ENCODE measurements at regions of chr6 and their contacts with region 1.

Region 1: DNA sequence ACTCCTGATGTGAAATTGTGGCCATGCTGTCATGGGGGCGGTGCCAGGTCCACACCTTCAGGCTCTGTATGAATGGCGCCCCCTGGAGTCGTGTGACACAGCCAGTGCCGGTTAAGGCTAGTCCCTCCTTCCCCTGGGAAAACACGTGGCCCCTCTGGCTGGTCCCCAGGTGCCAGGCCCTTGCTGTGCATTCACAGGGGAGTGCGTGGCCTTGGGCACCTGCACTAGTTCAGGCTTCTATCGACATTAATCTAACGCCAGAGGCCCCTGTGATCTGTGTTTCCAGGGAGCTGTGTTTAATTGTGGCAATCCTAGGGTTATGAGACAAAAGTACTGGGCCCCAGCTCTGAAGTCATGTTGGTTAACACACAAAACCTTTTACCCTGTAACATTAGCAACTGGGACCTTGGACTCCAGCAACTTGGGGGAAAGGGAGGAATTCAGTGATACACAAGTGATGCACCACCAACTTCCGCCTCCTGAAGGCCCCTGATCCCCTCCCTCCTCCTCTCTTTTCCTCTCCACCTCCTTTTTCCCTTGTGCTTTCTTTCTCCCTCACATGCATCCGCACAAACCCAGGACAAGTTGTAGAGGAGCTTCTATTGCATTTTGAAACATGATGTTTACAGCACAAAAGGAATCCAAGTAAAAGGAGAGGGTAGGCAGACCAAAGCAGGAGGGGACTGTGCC is 74.0 kb downstream of the SSR1 start:
- DNase-seq: peak; percentile 73 to 87 (median 83)
- H3K4me3 ChIP-seq: no peak overlapping the region
- H3K27ac ChIP-seq: no peak overlapping the region
- H3K4me1 ChIP-seq: no peaks in the 10 kb centered on the region
- H3K27me3 ChIP-seq: no peaks in the 10 kb centered on the region
- CTCF ChIP-seq: peak; percentile 26 to 53 (median 51)
- EP300 ChIP-seq: no peak
- POLR2A ChIP-seq: no peak

Region 2: DNA sequence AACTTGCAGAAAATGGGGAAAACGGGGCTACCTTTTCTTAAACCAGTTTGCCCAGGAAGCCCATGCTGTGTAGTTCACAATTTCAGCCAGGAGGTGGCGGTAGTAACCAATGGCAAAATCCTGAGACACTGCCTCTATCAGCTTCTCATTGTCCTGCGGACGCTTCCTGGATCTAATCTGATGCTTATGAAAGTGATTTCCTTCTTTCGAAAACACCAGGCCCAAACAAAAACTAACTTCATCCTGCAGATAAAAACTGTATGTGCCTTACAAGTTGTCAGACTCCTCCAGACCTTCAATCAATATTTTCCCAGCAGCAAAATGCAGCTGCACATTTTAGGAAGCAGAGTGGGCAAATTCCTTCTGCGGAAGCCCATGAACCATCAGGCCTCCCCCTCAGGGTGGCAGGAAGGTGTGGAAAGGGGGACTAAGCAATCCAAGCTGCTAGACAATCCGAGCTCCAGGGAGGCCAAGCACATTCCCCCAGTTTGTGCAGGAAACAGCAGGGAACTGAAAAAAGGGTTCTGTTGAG is 562.1 kb before region 1 on chr6:
- intact Hi-C with region 1: loop called in 2 of 4 experiments (anchors 1 to 5 kb)
- DNase-seq: peak; percentile 59 to 84 (median 82)
- H3K4me3 ChIP-seq: no peak overlapping the region
- H3K27ac ChIP-seq: no peak overlapping the region
- H3K4me1 ChIP-seq: no peaks in the 10 kb centered on the region
- H3K27me3 ChIP-seq: no peaks in the 10 kb centered on the region
- CTCF ChIP-seq: peak; percentile 81 to 95 (median 89)
- EP300 ChIP-seq: no peak
- POLR2A ChIP-seq: no peak

Region 3: DNA sequence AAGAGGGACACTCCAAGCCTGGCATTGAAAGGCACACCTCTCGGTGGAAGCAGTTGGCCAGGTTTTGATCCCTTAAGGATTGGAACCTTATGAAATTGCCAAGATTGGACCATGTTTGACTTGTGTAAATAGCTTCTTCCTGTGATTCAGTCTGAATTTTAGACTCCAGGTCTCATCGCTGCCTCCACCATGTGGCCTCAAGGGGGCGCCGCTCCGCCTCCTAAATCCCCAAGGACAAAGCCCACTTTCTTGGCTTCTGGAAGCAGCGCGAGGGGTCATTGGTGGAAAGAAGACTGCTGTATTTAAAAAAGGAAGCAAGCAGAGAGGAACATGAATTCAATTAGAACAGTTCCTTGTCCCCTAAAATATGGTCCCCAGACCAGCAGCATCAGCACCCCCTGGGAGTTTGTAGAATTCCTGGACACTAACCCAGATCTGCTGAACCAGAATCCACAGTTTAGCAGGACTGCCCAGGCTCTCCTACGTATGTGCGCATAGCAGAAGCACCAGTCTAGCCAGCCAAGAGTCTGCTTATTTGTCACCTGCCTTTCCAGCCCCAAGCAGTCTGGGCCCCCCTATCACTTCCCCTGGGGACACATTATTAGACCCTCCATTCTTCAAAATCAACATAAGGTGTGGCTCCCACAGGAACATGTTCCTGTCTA is 542.0 kb before region 1 on chr6:
- intact Hi-C with region 1: loop called in 1 of 4 experiments (anchors 10 kb)
- DNase-seq: peak; percentile 68 to 86 (median 72)
- H3K4me3 ChIP-seq: no peak overlapping the region
- H3K27ac ChIP-seq: no peak overlapping the region
- H3K4me1 ChIP-seq: peaks cover 34% of the 10 kb centered on the region
- H3K27me3 ChIP-seq: no peaks in the 10 kb centered on the region
- CTCF ChIP-seq: peak; percentile 24 to 53 (median 44)
- EP300 ChIP-seq: no peak
- POLR2A ChIP-seq: no peak

Region 4: DNA sequence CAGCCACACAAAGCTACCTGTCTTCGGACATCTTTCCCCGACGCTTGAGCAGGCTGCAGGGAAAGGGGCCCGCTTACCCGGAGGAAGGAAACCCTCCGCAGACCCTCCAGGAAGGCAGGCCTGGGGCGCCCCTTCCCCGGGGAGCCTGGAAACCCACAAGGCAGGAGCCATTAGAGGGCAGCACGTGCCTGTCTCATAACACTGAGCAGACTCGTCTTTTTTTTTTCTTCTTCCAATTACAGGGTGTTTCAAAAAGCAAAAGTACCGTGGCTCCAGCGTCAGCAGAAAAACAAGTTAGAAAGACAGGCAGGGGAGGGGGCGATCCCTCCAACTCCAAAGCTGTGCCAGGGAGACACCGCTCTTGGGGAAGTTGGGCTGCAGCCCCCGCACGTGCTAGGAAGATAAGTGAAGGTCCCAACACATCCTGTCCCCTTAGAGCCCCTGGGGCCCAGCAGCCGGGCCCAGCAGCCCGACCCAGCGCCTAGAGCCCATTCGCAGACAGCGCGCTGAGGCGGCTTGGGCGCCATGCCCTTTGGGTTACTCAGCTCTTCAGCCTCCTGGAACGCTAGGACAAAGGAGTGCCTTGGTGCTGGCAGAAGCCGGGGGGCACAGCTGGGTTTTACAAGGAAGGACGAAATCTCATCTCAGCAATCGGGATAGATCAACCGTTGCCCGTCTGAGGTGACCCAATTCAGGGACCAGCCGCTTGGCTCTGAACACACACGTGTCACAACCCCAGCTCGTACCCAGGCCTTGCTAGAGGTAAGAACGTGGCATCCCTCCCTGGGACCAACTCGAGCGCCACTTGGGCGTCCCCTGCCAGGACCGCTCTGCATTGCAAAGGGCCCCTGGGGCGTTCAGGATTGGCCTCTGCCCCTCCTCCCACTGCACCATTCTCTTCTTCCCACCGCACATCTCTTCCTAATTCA is 514.2 kb before region 1 on chr6:
- intact Hi-C with region 1: loop called (anchors 2 to 10 kb)
- DNase-seq: peak; percentile 82 to 86 (median 85)
- H3K4me3 ChIP-seq: peak overlapping the region; percentile 34
- H3K27ac ChIP-seq: peak overlapping the region; percentile 82 to 83
- H3K4me1 ChIP-seq: peaks cover 6% of the 10 kb centered on the region
- H3K27me3 ChIP-seq: no peaks in the 10 kb centered on the region
- CTCF ChIP-seq: peak; percentile 56 to 72 (median 59)
- EP300 ChIP-seq: no peak
- POLR2A ChIP-seq: no peak

Region 5: GRCh38 chr6:7129784-7130569 is 109.1 kb before region 1 on chr6:
- intact Hi-C with region 1: loop called in 1 of 4 experiments (anchors 10 kb)
- DNase-seq: no peak
- H3K4me3 ChIP-seq: no peak overlapping the region
- H3K27ac ChIP-seq: no peak overlapping the region
- H3K4me1 ChIP-seq: peaks cover 2% of the 10 kb centered on the region
- H3K27me3 ChIP-seq: no peaks in the 10 kb centered on the region
- CTCF ChIP-seq: no peak
- EP300 ChIP-seq: no peak
- POLR2A ChIP-seq: no peak

Region 6: GRCh38 chr6:7145885-7146828 is 92.9 kb before region 1 on chr6:
- intact Hi-C with region 1: no loop called
- DNase-seq: peak in 3 of 5 donors; percentile 43 to 51 (median 51)
- H3K4me3 ChIP-seq: no peak overlapping the region
- H3K27ac ChIP-seq: no peak overlapping the region
- H3K4me1 ChIP-seq: peaks cover 21% of the 10 kb centered on the region
- H3K27me3 ChIP-seq: no peaks in the 10 kb centered on the region
- CTCF ChIP-seq: no peak
- EP300 ChIP-seq: no peak
- POLR2A ChIP-seq: no peak

Measured in ovary (tissue), 10 donors.